Panc1 (cell line): ENCODE measurements at regions of chr10 and their contacts with region 1.

Region 1: GRCh38 chr10:51001587-51001986 is 72.7 kb upstream of the PRKG1 start:
- DNase-seq: no peak
- ATAC-seq: peak; percentile 78; the same call in 1 of the 2 replicates
- H3K4me3 ChIP-seq: no peak overlapping the region
- H3K27ac ChIP-seq: no peak overlapping the region
- H3K4me1 ChIP-seq: no peaks in the 10 kb centered on the region
- H3K27me3 ChIP-seq: peaks cover 34% of the 10 kb centered on the region
- CTCF ChIP-seq: peak; percentile 73; the same call in 1 of the 2 replicates

Region 2: GRCh38 chr10:51972733-51973346 is 971.3 kb after region 1 on chr10:
- CTCF ChIA-PET with region 1: no interaction called
- POLR2A ChIA-PET with region 1: no interaction called
- in situ Hi-C with region 1: no loop called
- intact Hi-C with region 1: loop called (anchors 5 kb)
- DNase-seq: no peak
- ATAC-seq: no peak
- H3K4me3 ChIP-seq: no peak overlapping the region
- H3K27ac ChIP-seq: no peak overlapping the region
- H3K4me1 ChIP-seq: no peaks in the 10 kb centered on the region
- H3K27me3 ChIP-seq: 0 out of 2 replicates have a peak, but pooled peaks cover 2% of the 10 kb centered on the region
- CTCF ChIP-seq: no peak